Endothelial cell of umbilical vein (primary cell): ENCODE measurements at regions of chr13 and their contacts with region 1.

Region 1: DNA sequence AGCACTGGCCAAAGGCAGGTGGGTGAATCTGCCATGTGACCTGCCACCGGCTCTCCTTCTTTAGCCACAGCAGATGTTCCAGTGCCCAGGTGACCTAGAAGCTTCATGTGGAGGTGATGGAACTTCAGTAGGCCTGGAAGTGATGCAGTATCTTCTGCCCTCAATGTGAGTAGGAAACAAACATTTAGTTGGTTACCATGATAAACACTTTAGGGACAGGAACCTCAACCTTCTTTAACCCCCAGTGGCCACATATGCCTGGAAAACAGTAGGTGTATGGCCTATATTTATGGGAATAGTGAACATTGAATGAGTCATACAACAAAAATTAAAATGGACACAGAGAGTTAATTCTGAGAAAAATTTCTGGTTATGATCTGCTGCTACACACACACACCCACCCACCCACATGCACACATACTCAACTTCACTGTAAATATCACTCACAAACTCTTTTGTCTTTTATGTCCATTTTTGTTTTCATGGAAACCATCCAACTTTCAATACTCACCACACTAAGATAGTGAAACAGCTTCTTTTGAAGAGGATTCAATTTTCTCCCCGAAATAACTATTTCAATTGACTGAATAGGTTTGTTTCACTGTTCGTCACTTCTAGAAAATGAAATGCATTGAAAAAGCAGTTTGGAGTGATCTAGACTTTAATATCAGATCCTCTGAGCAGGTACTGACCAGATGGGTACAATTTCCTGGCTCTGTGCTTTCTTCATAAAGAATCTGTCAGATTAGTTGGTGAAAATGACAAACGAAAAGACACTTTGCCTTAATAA is 97.3 kb downstream of the STARD13 start:
- DNase-seq: peak; percentile 45
- H3K4me3 ChIP-seq: no peak overlapping the region
- H3K27ac ChIP-seq: peak overlapping the region; percentile 84
- H3K4me1 ChIP-seq: peaks cover 50% of the 10 kb centered on the region
- H3K27me3 ChIP-seq: no peaks in the 10 kb centered on the region
- CTCF ChIP-seq: no peak
- POLR2A ChIP-seq: no peak

Region 2: DNA sequence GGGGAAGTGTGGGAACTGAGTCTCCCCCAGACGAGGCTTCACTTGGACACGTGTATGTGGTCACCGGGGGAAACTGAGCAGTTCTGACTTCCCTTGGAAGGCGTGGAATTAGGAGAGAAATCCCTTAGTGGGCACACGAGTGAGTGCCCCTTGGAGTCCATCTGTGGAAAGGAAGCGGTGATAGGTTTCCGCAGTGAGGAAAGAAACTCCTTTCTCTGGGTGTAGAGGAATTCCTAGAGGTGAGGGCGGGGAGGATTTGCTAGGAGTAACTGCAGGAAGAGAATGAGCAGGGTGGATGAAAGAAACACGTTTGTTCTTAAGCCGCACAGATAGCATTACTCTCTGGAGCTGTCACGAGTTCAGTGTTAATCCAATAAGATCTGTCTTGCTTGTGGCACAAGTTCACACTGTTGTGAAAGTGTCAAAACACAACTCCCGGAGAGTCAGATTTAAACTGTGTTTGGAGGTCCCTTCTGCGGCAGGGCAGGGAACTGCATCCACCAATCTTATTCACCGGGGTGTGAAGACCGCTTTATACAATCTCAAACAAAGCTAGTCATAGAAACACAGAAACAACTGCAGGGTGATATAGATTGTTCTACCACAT is 170.9 kb before region 1 on chr13:
- CTCF ChIA-PET with region 1: no interaction called
- POLR2A ChIA-PET with region 1: no interaction called
- dilution Hi-C with region 1: no loop called
- intact Hi-C with region 1: no loop called
- DNase-seq: peak; percentile 30
- H3K4me3 ChIP-seq: no peak overlapping the region
- H3K27ac ChIP-seq: no peak overlapping the region
- H3K4me1 ChIP-seq: peaks cover 8% of the 10 kb centered on the region
- H3K27me3 ChIP-seq: peaks cover 46 to 70% of the 10 kb centered on the region in 2 experiments
- CTCF ChIP-seq: peak; percentile 29 to 32
- POLR2A ChIP-seq: no peak

Region 3: GRCh38 chr13:33169273-33169980 is 18.9 kb before region 1 on chr13:
- CTCF ChIA-PET with region 1: interaction called, 11 read pairs
- POLR2A ChIA-PET with region 1: no interaction called
- dilution Hi-C with region 1: no loop called
- intact Hi-C with region 1: no loop called
- DNase-seq: peak; percentile 87
- H3K4me3 ChIP-seq: no peak overlapping the region
- H3K27ac ChIP-seq: peak overlapping the region; percentile 83
- H3K4me1 ChIP-seq: peaks cover 22% of the 10 kb centered on the region
- H3K27me3 ChIP-seq: no peaks in the 10 kb centered on the region
- CTCF ChIP-seq: no peak
- POLR2A ChIP-seq: no peak

Region 4: DNA sequence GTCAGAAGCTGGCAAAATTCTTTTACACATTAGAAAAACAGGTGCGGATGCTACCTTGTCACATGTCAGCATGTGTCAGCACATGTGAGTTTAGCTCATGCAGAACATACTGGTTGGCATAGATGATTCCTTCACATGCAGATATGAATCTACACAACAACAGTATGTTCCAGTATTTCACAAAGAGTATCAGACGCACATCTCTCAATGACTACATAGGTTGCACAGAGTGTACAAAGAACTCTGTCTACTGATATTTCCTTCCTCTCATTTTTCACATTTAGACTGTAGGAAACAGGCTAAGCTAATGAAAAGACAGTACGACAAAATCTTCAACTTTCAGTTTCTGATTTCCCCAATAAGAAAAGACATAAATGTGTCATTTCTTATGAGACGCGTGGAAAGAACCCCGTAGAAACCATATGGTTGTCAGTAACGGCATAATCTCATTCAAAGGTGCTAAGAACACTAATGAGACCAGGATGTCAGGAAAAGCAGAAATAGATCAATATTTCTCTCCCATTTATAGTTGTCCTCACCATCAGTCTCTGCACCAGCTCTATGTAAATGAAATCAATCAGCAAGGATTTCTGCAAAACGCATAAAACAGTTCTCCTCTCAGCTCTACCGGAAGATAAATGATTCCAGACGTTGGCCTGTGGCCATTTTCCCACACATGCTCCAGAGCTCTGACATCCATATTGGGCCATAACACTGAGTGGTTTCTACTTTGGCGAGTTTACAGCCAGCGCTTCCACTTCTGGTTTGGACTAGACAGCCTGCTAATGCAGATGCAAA is 16.0 kb after region 1 on chr13:
- CTCF ChIA-PET with region 1: interaction called, 23 read pairs
- POLR2A ChIA-PET with region 1: interaction called, 3 read pairs
- dilution Hi-C with region 1: no loop called
- intact Hi-C with region 1: loop called (anchors 2 kb)
- DNase-seq: peak; percentile 89
- H3K4me3 ChIP-seq: no peak overlapping the region
- H3K27ac ChIP-seq: peak overlapping the region; percentile 76
- H3K4me1 ChIP-seq: peaks cover 54% of the 10 kb centered on the region
- H3K27me3 ChIP-seq: no peaks in the 10 kb centered on the region
- CTCF ChIP-seq: no peak
- POLR2A ChIP-seq: no peak

Region 5: GRCh38 chr13:33251131-33251661 is 62.9 kb after region 1 on chr13:
- CTCF ChIA-PET with region 1: no interaction called
- POLR2A ChIA-PET with region 1: no interaction called
- dilution Hi-C with region 1: no loop called
- intact Hi-C with region 1: loop called (anchors 2 kb)
- DNase-seq: peak; percentile 87
- H3K4me3 ChIP-seq: peak overlapping the region in 1 of 3 experiments; percentile 3
- H3K27ac ChIP-seq: peak overlapping the region; percentile 85
- H3K4me1 ChIP-seq: peaks cover 44% of the 10 kb centered on the region
- H3K27me3 ChIP-seq: no peaks in the 10 kb centered on the region
- CTCF ChIP-seq: no peak
- POLR2A ChIP-seq: no peak